ENCODE measurements at regions of chr6 and their contacts with region 1.

Region 1: DNA sequence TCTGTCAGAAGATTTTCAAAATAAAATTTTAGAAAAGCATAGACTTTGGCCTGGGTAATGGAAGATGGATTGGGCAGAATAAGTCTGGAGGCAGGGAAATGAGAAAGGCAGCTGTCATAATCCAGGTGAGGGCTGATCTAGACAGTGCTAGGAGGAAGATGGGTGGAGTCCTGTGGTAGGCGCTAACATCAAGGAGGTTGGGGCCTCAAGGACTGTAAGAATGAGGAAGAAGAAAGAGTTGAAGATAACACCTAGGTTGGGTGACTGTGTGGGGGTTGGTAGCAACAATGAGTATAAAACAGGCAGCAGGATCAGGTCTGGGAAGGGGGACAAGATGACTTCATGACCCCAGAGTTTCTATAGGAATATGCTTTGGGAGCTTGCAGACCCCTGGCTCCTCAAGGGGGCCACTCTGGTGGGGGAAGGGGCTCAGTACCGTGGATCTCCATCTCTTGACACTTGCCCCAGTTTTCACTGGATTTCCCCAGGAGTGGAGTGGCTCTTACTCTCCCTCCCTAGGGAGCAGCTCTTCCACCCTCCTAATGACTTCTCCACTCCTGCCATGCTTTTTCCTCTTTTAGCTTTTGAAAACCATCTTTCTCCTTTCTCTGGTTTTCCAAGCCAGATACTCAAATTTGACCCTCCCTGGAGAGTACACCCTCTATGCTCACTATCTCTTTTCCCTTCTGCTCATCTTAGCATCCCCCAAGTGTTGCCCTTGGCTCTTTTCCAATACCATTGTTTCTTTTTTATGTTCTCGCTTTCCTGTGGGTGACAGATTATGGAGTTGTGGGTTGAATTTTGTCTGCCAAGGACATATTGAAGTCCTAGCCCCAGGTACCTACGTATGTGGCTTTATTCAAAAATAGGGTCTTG is 14.8 kb downstream of the TRIM31 start:
- DNase-seq: peak in 4 of 14 experiments; percentile 18 to 52 (median 39)
- ATAC-seq: peak; percentile 64
- H3K4me3 ChIP-seq: no peak overlapping the region
- H3K4me3 Mint-ChIP-seq: peak overlapping the region; percentile 7
- H3K27ac ChIP-seq: no peak overlapping the region
- H3K27ac Mint-ChIP-seq: no peak overlapping the region
- H3K4me1 ChIP-seq: peaks cover 42% of the 10 kb centered on the region
- H3K4me1 Mint-ChIP-seq: peaks cover 53% of the 10 kb centered on the region
- H3K27me3 ChIP-seq: peaks cover 11 to 25% of the 10 kb centered on the region in 2 experiments
- H3K27me3 Mint-ChIP-seq: peaks cover 70% of the 10 kb centered on the region
- CTCF ChIP-seq: no peak

Region 2: GRCh38 chr6:30075161-30075986 is 22.8 kb before region 1 on chr6 and contains the start of gene RNF39:
- CTCF ChIA-PET with region 1: interaction called, 4 read pairs
- POLR2A ChIA-PET with region 1: interaction called, 7 read pairs
- intact Hi-C with region 1: loop called in 1 of 2 experiments (anchors 2 kb)
- DNase-seq: peak in 4 of 14 experiments; percentile 19 to 58 (median 48)
- ATAC-seq: peak; percentile 50
- H3K4me3 ChIP-seq: peak within 1 kb of the TSS; percentile 42
- H3K4me3 Mint-ChIP-seq: peak within 1 kb of the TSS; percentile 84
- H3K27ac ChIP-seq: no peak within 1 kb of the TSS
- H3K27ac Mint-ChIP-seq: no peak within 1 kb of the TSS
- H3K4me1 ChIP-seq: peaks cover 52% of the 10 kb centered on the region
- H3K4me1 Mint-ChIP-seq: peaks cover 59% of the 10 kb centered on the region
- H3K27me3 ChIP-seq: peaks cover 32 to 39% of the 10 kb centered on the region in 2 experiments
- H3K27me3 Mint-ChIP-seq: peaks cover 52% of the 10 kb centered on the region
- CTCF ChIP-seq: peak; percentile 40
- total RNA-seq, gene RNF39: not detected

Region 3: DNA sequence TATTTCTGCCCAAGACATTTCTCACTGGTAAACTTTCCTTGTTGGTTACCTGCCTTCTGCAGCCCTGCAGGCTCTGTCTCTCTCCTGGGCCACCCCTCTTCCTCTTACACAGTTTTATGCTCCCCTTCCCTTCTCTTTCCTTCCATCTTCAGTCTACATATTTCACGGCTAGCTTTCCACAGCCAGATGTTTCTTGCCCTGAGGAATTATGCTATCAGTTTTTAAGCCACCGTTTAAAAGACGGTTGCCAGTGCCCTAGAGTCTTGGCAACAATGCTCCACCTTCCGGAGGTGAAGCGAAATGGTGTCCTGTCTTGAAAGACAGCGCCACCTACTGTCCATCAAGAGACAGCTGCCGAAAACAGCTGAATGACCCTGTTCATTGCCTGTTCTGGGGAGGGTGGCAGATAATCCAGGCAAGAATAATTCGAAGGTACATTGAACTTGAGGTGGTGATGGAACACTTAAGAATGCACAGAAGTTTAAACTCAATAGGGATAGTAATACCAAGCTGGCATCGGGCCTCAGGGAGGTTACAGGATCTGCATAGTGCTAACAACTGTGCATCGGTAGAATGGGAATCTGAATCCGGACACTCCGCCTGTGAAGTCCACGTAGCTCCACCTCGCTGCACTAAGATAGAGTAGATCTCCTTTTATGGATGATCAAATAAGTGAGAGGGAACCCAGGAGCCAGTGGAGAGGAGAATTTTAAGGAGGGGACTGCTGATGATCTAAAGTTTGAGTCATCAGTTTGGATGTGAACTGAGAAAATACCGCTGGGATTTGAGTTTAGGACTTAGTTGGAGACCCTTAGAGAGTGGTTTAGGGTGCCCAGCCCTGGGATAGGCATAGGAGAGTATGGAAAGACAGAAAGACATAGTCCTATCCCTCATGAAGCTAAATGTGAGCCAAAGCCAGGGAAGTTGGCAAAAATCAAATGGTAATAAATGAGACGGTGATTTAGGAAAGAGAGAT is 33.0 kb after region 1 on chr6:
- CTCF ChIA-PET with region 1: interaction called, 198 read pairs
- POLR2A ChIA-PET with region 1: interaction called, 22 read pairs
- intact Hi-C with region 1: loop called (anchors 1 kb)
- DNase-seq: peak; percentile 45 to 92 (median 60)
- ATAC-seq: peak; percentile 98
- H3K4me3 ChIP-seq: no peak overlapping the region
- H3K4me3 Mint-ChIP-seq: no peak overlapping the region
- H3K27ac ChIP-seq: no peak overlapping the region
- H3K27ac Mint-ChIP-seq: no peak overlapping the region
- H3K4me1 ChIP-seq: peaks cover 13% of the 10 kb centered on the region
- H3K4me1 Mint-ChIP-seq: peaks cover 5% of the 10 kb centered on the region
- H3K27me3 ChIP-seq: peaks cover 37 to 58% of the 10 kb centered on the region in 2 experiments
- H3K27me3 Mint-ChIP-seq: peaks cover 71% of the 10 kb centered on the region
- CTCF ChIP-seq: peak; percentile 100

Region 4: GRCh38 chr6:30200551-30201281 is 102.6 kb after region 1 on chr6:
- CTCF ChIA-PET with region 1: no interaction called
- POLR2A ChIA-PET with region 1: no interaction called
- intact Hi-C with region 1: no loop called
- DNase-seq: peak in 2 of 14 experiments; percentile 15 to 28
- ATAC-seq: no peak
- H3K4me3 ChIP-seq: no peak overlapping the region
- H3K4me3 Mint-ChIP-seq: no peak overlapping the region
- H3K27ac ChIP-seq: no peak overlapping the region
- H3K27ac Mint-ChIP-seq: peak overlapping the region; percentile 11
- H3K4me1 ChIP-seq: peaks cover 18% of the 10 kb centered on the region
- H3K4me1 Mint-ChIP-seq: peaks cover 46% of the 10 kb centered on the region
- H3K27me3 ChIP-seq: no peaks in the 10 kb centered on the region
- H3K27me3 Mint-ChIP-seq: no peaks in the 10 kb centered on the region
- CTCF ChIP-seq: no peak